CD8-positive, alpha-beta memory T cell (primary cell): ENCODE measurements at regions of chr1 and their contacts with region 1.

Region 1: DNA sequence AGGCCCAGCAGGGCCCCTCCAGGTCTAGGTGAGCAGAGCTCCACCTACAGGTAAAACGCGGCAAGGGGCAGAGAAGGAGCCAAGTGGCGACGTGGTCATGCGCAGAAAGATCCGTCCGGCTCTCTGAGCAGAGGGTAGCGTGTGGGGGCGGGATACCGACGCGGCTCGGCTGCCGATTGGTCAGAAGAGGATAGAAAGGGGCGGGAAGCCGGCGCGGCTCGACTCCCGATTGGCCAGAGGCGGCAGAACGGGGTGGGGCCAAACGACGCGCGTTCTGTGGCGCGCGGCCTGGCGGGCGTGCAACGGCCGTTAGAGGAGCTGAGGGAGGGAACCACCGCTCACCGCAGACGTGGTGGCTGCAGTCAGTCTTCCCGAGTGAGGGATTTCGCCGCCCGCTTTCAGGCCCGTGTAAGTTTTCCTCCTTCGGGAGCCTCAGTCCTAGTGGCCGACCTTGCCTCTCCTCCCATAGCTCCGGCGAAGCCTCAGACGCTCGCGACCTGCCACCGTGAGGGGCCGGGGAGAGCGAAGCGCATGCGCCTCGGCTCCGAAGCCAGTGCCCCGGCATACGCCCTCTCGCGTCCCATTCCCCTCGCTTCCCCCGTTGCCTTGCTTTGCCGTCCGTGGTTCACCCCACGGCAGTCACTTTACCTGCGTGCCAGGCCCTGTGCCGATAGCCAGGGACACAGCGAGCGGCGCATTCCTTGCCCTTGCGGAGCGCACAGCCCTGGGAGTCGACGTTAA is at the start of gene CEP85:
- DNase-seq: peak; percentile 97 to 99 (median 98)
- H3K4me3 ChIP-seq: peak within 1 kb of the TSS; percentile 96
- H3K4me3 Mint-ChIP-seq: peak within 1 kb of the TSS; percentile 95 to 99 (median 97)
- H3K27ac ChIP-seq: peak within 1 kb of the TSS; percentile 89
- H3K27ac Mint-ChIP-seq: peak within 1 kb of the TSS; percentile 91 to 98 (median 96)
- H3K4me1 ChIP-seq: peaks cover 29% of the 10 kb centered on the region
- H3K4me1 Mint-ChIP-seq: peaks cover 29 to 38% (median 35%) of the 10 kb centered on the region in 3 donors
- H3K27me3 ChIP-seq: no peaks in the 10 kb centered on the region
- H3K27me3 Mint-ChIP-seq: peaks cover 0 to 5% of the 10 kb centered on the region in 2 donors
- total RNA-seq, gene CEP85: 28.8 to 29.7 TPM

Region 2: DNA sequence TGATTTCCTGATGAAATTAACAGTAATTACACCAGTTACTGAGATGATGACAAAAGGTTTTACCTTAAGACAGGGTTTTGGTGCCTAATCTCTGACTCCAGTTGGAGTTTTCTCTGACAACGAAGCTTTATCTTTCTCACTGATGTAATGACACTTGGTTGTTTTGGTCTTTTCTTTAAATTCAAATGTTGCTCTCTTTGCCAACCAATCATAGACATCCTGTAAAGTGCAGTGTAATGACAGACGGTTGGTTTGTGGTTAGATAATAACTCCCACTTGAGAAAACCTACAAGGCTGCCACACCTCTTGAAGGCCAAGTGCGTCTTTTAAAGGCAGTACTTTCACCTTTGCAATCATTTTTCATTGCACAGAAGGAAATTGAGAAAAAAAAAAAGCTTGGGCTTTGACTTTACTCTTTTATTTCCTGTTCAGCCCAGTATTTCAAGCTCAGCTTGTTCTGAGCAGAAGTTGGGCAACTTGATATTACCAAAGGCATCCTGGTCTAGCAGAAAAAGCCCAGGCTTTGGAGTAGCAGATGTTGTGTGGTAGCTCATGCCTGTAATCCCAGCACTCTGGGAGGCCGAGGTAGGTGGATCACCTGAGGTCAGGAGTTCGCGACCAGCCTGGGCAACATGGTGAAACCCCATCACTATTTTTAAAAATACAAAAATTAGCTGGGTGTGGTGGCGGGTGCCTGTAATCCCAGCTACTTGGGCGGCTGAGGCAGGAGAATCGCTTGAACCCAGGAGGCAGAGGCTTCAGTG is 107.6 kb before region 1 on chr1:
- CTCF ChIA-PET with region 1: interaction called, 10 read pairs
- POLR2A ChIA-PET with region 1: no interaction called
- DNase-seq: peak in 4 of 5 donors; percentile 46 to 90 (median 84)
- H3K4me3 ChIP-seq: peak overlapping the region; percentile 38
- H3K4me3 Mint-ChIP-seq: peak overlapping the region; percentile 22 to 82 (median 71)
- H3K27ac ChIP-seq: peak overlapping the region; percentile 79
- H3K27ac Mint-ChIP-seq: peak overlapping the region; percentile 58 to 93 (median 89)
- H3K4me1 ChIP-seq: peaks cover 29% of the 10 kb centered on the region
- H3K4me1 Mint-ChIP-seq: peaks cover 32 to 53% (median 48%) of the 10 kb centered on the region in 3 donors
- H3K27me3 ChIP-seq: no peaks in the 10 kb centered on the region
- H3K27me3 Mint-ChIP-seq: peaks cover 0 to 16% of the 10 kb centered on the region in 2 donors

Region 3: GRCh38 chr1:26190373-26190987 is 43.6 kb before region 1 on chr1 and contains the start of gene CATSPER4:
- CTCF ChIA-PET with region 1: interaction called, 11 read pairs
- POLR2A ChIA-PET with region 1: no interaction called
- DNase-seq: no peak
- H3K4me3 ChIP-seq: no peak within 1 kb of the TSS
- H3K4me3 Mint-ChIP-seq: no peak within 1 kb of the TSS
- H3K27ac ChIP-seq: no peak within 1 kb of the TSS
- H3K27ac Mint-ChIP-seq: peak within 1 kb of the TSS in 3 of 8 donors; percentile 44 to 61 (median 44)
- H3K4me1 ChIP-seq: peaks cover 7% of the 10 kb centered on the region
- H3K4me1 Mint-ChIP-seq: peaks cover 4 to 8% (median 7%) of the 10 kb centered on the region in 3 donors
- H3K27me3 ChIP-seq: no peaks in the 10 kb centered on the region
- H3K27me3 Mint-ChIP-seq: peaks cover 0 to 3% of the 10 kb centered on the region in 2 donors
- total RNA-seq, gene CATSPER4: not detected

Region 4: DNA sequence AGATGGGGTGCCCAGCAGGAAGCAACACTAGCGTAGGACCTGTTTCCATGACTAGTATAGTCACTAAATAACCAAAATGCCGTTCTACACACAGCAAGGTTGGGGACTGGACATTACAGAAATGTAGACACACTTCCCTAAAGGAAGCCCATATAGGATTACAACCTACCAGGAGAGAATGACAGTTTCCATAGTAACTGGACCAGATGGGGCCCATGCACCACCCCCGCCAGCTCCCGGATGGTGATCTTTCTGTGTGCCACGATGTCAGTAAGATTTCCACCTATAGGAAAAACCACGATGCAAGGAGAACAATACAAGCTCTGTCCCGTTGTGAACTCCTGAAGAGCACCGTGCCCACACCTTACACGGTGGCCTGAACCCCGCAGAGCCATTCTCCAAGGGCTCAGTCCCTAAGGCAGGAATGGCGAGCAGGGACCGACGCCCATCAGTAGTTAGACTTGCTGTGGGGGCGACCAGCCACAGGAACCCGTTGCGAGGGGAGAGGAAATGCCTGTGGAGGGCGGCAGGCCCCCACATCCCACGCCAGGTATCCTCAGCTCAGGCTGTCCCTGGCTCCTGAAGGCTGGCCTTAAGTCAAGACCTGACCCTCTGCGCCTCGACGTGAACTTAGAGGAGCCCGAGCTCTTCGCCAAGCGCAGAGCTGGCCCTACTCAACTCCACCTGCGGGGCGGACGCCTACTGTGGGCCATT is 13.7 kb before region 1 on chr1:
- CTCF ChIA-PET with region 1: interaction called, 19 read pairs
- POLR2A ChIA-PET with region 1: interaction called, 3 read pairs
- DNase-seq: no peak
- H3K4me3 ChIP-seq: no peak overlapping the region
- H3K4me3 Mint-ChIP-seq: no peak overlapping the region
- H3K27ac ChIP-seq: no peak overlapping the region
- H3K27ac Mint-ChIP-seq: no peak overlapping the region
- H3K4me1 ChIP-seq: no peaks in the 10 kb centered on the region
- H3K4me1 Mint-ChIP-seq: peaks cover 0 to under 1% (median 0%) of the 10 kb centered on the region in 3 donors
- H3K27me3 ChIP-seq: no peaks in the 10 kb centered on the region
- H3K27me3 Mint-ChIP-seq: peaks cover 12 to 18% of the 10 kb centered on the region in 2 donors

Region 5: DNA sequence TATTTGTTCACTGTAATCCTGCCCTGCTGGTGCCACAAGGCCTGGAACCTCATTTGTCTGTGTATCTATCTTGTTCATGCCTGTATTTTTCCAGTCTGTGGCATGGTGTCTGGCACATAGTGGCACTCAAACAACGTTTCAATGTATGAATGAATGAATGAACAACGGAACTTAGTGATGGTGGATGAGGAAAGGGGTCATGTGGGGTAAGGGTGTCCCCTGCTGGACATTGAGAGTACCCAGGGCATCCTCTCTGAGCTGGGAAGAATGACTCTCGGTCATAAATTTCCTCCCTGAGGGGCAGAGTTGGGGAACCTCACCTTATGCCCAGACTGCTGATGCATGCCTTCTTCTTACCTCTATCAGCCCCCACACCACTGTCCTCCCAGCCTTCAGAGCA is 157.4 kb after region 1 on chr1:
- CTCF ChIA-PET with region 1: interaction called, 10 read pairs
- POLR2A ChIA-PET with region 1: no interaction called
- DNase-seq: peak in 4 of 5 donors; percentile 24 to 73 (median 46)
- H3K4me3 ChIP-seq: no peak overlapping the region
- H3K4me3 Mint-ChIP-seq: peak overlapping the region in 3 of 7 donors; percentile 0 to 22 (median 18)
- H3K27ac ChIP-seq: no peak overlapping the region
- H3K27ac Mint-ChIP-seq: peak overlapping the region in 4 of 8 donors; percentile 1 to 15 (median 4)
- H3K4me1 ChIP-seq: peaks cover 10% of the 10 kb centered on the region
- H3K4me1 Mint-ChIP-seq: peaks cover 32 to 45% (median 35%) of the 10 kb centered on the region in 3 donors
- H3K27me3 ChIP-seq: no peaks in the 10 kb centered on the region
- H3K27me3 Mint-ChIP-seq: peaks cover 0 to 9% of the 10 kb centered on the region in 2 donors